Left ventricle myocardium superior (tissue), 1 donor: ENCODE measurements at regions of chr9 and their contacts with region 1.

Region 1: DNA sequence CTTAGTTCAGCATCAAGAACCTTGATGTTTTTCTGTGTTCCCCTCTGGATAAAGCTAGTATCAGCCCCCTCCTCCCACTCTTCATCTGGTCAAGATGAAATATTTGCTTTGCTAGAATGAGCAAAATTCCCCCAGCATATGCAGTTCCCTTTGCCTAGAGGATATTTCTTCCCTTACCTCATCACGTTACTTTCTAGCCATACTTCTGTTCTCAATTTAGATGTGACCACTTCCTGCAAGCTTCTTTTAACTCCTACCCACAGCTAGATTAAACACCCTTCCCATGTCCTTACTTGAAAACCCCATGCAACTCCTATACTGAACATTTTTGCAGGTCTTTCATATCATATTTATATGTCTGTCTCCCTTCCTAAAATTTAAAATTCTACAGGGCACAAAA is 178.9 kb upstream of the TUSC1 start:
- DNase-seq: no peak
- ATAC-seq: no peak

Region 2: DNA sequence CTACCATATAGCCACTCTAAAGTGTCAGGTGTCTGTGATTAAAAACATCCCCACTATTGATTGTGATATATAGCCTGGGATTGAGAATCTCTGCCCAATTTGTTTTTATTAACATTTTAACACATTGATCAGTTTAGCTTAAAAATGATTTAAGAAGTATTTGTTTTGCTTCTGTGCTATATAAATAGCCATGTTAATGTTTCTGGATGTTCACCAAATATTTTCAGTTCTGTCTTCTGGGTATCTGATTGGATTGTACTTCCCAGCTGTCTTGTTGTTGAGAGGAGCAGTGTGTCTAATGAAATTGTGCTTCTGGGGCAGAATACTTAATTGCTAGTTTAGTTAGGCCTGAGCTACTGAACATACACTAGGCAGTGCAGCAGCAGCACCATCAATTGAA is 52.3 kb before region 1 on chr9:
- intact Hi-C with region 1: loop called (anchors 10 kb)
- DNase-seq: no peak
- ATAC-seq: no peak